ENCODE measurements at regions of chr12 and their contacts with region 1.

Region 1: GRCh38 chr12:54661048-54661447 is 12.9 kb upstream of the DCD start:
- DNase-seq: no peak
- H3K4me3 ChIP-seq: no peak overlapping the region
- H3K27ac ChIP-seq: no peak overlapping the region
- H3K4me1 ChIP-seq: no peaks in the 10 kb centered on the region
- H3K27me3 ChIP-seq: no peaks in the 10 kb centered on the region
- CTCF ChIP-seq: no peak
- EP300 ChIP-seq: no peak
- POLR2A ChIP-seq: no peak

Region 2: GRCh38 chr12:55057481-55057880 is 396.4 kb after region 1 on chr12:
- intact Hi-C with region 1: no loop called
- DNase-seq: no peak
- H3K4me3 ChIP-seq: no peak overlapping the region
- H3K27ac ChIP-seq: no peak overlapping the region
- H3K4me1 ChIP-seq: no peaks in the 10 kb centered on the region
- H3K27me3 ChIP-seq: no peaks in the 10 kb centered on the region
- CTCF ChIP-seq: no peak
- EP300 ChIP-seq: no peak
- POLR2A ChIP-seq: no peak

Region 3: GRCh38 chr12:55619354-55620138 is 958.5 kb after region 1 on chr12:
- intact Hi-C with region 1: loop called in 1 of 4 experiments (anchors 10 kb)
- DNase-seq: no peak
- H3K4me3 ChIP-seq: no peak overlapping the region
- H3K27ac ChIP-seq: no peak overlapping the region
- H3K4me1 ChIP-seq: no peaks in the 10 kb centered on the region
- H3K27me3 ChIP-seq: no peaks in the 10 kb centered on the region
- CTCF ChIP-seq: peak in 2 of 3 donors; percentile 57 to 61
- EP300 ChIP-seq: no peak
- POLR2A ChIP-seq: no peak